B cell (primary cell): ENCODE measurements at regions of chrX and their contacts with region 1.

Region 1: GRCh38 chrX:65688403-65688871 is 21.0 kb downstream of the MSN start:
- DNase-seq: no peak
- ATAC-seq: peak; percentile 20
- H3K4me3 ChIP-seq: peak overlapping the region in 1 of 5 experiments; percentile 13
- H3K4me3 Mint-ChIP-seq: peak overlapping the region; percentile 76
- H3K27ac ChIP-seq: peak overlapping the region; percentile 52 to 83
- H3K27ac Mint-ChIP-seq: peak overlapping the region; percentile 84
- H3K4me1 ChIP-seq: peaks cover 93 to 94% of the 10 kb centered on the region in 2 donors
- H3K4me1 Mint-ChIP-seq: peaks cover 84% of the 10 kb centered on the region
- H3K27me3 ChIP-seq: no peaks in the 10 kb centered on the region
- H3K27me3 Mint-ChIP-seq: no peaks in the 10 kb centered on the region
- CTCF ChIP-seq: no peak

Region 2: DNA sequence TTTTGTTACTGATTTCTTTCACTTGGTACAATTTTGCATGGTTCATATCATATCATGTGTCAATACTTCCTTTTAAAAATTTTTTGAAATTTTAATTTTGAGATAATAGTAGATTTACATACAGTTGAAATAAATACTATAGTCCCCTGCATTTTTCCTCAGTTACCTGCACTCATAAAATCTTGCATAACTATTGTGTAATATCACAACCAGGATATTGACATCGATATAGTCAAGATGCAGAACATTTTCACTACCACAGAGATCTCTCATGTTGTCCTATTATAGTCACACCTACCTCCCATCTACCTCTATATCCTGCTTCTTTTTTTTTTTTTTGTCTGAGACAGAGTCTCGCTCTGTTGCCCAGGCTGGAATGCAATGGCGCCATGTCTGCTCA is 57.7 kb before region 1 on chrX:
- CTCF ChIA-PET with region 1: no interaction called
- POLR2A ChIA-PET with region 1: no interaction called
- intact Hi-C with region 1: no loop called
- DNase-seq: no peak
- ATAC-seq: no peak
- H3K4me3 ChIP-seq: no peak overlapping the region
- H3K4me3 Mint-ChIP-seq: no peak overlapping the region
- H3K27ac ChIP-seq: no peak overlapping the region
- H3K27ac Mint-ChIP-seq: no peak overlapping the region
- H3K4me1 ChIP-seq: no peaks in the 10 kb centered on the region
- H3K4me1 Mint-ChIP-seq: no peaks in the 10 kb centered on the region
- H3K27me3 ChIP-seq: no peaks in the 10 kb centered on the region
- H3K27me3 Mint-ChIP-seq: no peaks in the 10 kb centered on the region
- CTCF ChIP-seq: no peak

Region 3: DNA sequence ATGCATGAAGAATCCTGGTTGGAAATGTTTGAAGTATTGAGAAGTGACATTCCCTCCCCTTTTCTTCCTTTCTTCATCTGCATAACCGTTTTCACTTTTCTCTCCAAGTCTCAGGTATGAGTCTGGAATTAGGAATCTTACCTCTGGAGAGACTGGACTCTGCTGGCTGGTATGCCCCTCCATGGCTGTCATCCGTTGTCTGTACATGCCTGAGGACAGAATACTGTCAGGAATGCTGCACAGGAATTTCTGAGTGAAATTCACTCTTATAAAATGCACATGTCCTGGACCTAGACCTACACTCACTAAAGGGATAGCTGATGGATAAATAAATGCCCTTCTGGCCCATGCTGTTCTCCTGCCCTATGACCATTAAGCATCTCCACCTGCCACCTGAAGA is 158.5 kb after region 1 on chrX:
- CTCF ChIA-PET with region 1: no interaction called
- POLR2A ChIA-PET with region 1: interaction called, 10 read pairs
- intact Hi-C with region 1: no loop called
- DNase-seq: no peak
- ATAC-seq: no peak
- H3K4me3 ChIP-seq: no peak overlapping the region
- H3K4me3 Mint-ChIP-seq: no peak overlapping the region
- H3K27ac ChIP-seq: no peak overlapping the region
- H3K27ac Mint-ChIP-seq: no peak overlapping the region
- H3K4me1 ChIP-seq: no peaks in the 10 kb centered on the region
- H3K4me1 Mint-ChIP-seq: no peaks in the 10 kb centered on the region
- H3K27me3 ChIP-seq: no peaks in the 10 kb centered on the region
- H3K27me3 Mint-ChIP-seq: no peaks in the 10 kb centered on the region
- CTCF ChIP-seq: no peak